ENCODE measurements at regions of chr7 and their contacts with region 1.

Region 1: GRCh38 chr7:5665094-5666025 is 116.1 kb downstream of the RNF216 start:
- DNase-seq: peak; percentile 58 to 85 (median 73)
- H3K4me3 ChIP-seq: no peak overlapping the region
- H3K27ac ChIP-seq: no peak overlapping the region
- H3K4me1 ChIP-seq: no peaks in the 10 kb centered on the region
- H3K27me3 ChIP-seq: no peaks in the 10 kb centered on the region
- CTCF ChIP-seq: peak; percentile 66 to 92 (median 90)
- EP300 ChIP-seq: no peak
- POLR2A ChIP-seq: no peak

Region 2: GRCh38 chr7:5704534-5704922 is 39.2 kb after region 1 on chr7:
- intact Hi-C with region 1: loop called in 1 of 4 experiments (anchors 5 kb)
- DNase-seq: peak; percentile 76 to 90 (median 81)
- H3K4me3 ChIP-seq: no peak overlapping the region
- H3K27ac ChIP-seq: no peak overlapping the region
- H3K4me1 ChIP-seq: peaks cover 7% of the 10 kb centered on the region
- H3K27me3 ChIP-seq: no peaks in the 10 kb centered on the region
- CTCF ChIP-seq: peak; percentile 90 to 93 (median 93)
- EP300 ChIP-seq: no peak
- POLR2A ChIP-seq: no peak

Measured in ovary (tissue), 10 donors.